ENCODE measurements at regions of chr10 and their contacts with region 1.

Region 1: GRCh38 chr10:33193057-33193700 is 141.3 kb downstream of the NRP1 start:
- DNase-seq: peak; percentile 68
- H3K4me3 ChIP-seq: peak overlapping the region in 1 of 2 experiments; percentile 32; a peak in 1 of 4 replicates
- H3K27ac ChIP-seq: peak overlapping the region; percentile 62 to 64; a peak in 3 of 4 replicates
- H3K4me1 ChIP-seq: peaks cover 4 to 34% of the 10 kb centered on the region in 2 experiments; a peak in 3 of 4 replicates
- H3K27me3 ChIP-seq: no peaks in the 10 kb centered on the region
- CTCF ChIP-seq: peak; percentile 88
- EP300 ChIP-seq: peak in 1 of 2 experiments; percentile 25; a peak in 1 of 4 replicates
- RAD21 ChIP-seq: peak; percentile 91

Region 2: DNA sequence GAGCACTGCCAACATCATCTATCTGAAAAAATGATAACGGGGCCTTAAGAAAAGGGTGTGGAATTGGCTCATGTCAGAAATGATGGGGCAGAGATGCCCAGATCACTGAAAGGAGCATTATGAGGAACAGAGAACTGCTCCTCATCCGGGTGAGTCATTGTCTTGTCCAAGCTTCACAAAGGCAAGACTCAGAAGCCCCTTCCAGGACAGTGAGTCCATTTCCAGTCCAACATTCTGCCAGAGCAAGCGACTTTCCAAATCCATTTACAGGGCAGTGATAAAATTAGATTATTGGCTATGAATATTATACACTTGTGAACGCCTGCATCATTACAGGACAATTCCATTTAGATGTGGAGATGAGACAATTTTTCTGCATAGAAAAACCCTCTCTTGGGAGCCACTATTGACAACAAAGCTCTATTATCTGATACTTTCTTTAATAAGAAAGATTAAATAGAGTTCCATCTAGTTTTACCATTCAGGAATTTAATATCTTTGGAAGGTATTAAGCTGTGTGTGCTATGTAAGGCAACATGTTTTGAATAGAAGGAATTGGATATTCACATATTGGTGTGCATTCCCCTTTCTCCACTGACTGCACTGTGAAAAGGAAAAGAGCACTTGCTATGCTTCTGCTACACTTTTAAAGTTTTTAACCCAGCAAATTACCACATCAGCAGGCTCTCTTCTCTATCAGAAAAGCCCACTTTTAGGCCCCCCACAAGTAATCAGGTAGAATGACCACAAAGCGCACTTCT is 18.3 kb before region 1 on chr10:
- CTCF ChIA-PET with region 1: interaction called, 14 read pairs
- POLR2A ChIA-PET with region 1: no interaction called
- DNase-seq: no peak
- H3K4me3 ChIP-seq: no peak overlapping the region
- H3K27ac ChIP-seq: peak overlapping the region in 1 of 2 experiments; percentile 65; a peak in 2 of 4 replicates
- H3K4me1 ChIP-seq: peaks cover 2 to 33% of the 10 kb centered on the region in 2 experiments; a peak in 3 of 4 replicates
- H3K27me3 ChIP-seq: no peaks in the 10 kb centered on the region
- CTCF ChIP-seq: no peak
- EP300 ChIP-seq: no peak
- RAD21 ChIP-seq: no peak

Region 3: DNA sequence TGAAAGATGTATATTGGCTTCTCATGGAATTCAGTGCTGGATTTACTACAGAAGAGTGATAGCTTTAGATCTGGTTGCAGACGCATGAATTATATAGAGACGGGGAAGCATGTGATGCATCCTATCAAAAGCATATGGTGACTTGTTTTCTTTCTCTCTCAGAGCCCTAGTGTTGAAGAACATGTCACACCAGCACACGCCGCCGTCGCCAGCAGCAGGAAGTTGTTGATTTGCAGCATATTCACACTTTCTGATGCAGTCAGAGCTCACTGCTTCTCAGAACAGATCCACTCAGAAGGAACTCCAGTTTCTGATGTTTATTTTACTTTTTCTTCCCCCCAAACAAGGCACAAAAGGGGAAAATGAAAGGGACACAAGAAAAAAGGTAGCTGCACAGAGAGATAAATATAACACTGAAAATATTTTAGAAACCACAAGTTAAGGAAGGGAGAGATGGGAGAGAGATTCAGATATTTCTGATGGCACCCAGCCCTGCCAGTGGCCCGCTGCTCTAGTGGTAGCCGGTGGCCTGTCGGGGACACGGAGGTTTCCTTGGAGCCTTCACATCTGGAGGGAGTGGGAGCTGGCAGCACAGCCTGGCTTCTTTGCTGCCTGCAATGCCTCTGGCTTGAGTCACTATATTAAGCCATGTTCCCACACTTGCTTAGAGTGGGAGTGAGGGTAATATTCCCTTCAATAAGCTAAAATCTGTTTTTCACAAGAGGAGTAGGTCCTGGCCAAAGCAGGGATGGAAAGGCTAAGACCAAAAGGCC is 18.1 kb after region 1 on chr10:
- CTCF ChIA-PET with region 1: interaction called, 14 read pairs
- POLR2A ChIA-PET with region 1: no interaction called
- DNase-seq: peak; percentile 22
- H3K4me3 ChIP-seq: no peak overlapping the region
- H3K27ac ChIP-seq: peak overlapping the region; percentile 48 to 88
- H3K4me1 ChIP-seq: peaks cover 9 to 31% of the 10 kb centered on the region in 2 experiments; a peak in 2 of 4 replicates
- H3K27me3 ChIP-seq: no peaks in the 10 kb centered on the region
- CTCF ChIP-seq: no peak
- EP300 ChIP-seq: no peak
- RAD21 ChIP-seq: no peak

Region 4: DNA sequence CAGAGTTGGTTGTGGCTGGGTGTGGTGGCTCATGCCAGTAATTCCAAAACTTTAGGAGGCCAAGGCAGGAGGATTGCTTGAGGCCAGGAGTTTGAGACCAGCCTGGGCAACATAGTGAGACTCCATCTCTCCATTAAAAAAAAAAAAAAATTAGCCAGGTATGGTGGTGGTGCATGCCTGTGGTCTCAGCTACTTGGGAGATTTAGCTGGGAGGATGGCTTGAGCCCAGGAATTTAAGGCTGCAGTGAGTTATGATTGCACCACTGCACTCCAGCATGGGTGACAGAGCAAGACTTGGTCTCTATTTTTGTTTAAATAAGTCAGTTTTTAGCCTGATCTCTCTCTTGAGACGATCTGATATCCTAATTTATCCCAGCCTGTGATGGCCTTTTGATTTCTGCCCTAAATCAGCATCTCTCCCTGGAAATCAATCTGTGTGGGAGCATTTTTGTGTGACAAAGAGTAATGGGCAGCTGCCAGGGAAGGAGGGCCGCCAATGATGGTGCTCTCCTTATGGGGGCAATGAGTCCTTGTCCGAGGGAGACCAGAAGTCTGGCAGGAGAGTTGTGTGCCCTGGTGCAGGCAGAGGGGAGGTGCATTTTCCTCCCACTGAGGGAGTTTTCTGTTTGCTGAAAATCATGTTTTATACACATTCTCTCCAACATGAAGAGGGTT is 30.3 kb after region 1 on chr10:
- CTCF ChIA-PET with region 1: interaction called, 13 read pairs
- POLR2A ChIA-PET with region 1: no interaction called
- DNase-seq: no peak
- H3K4me3 ChIP-seq: no peak overlapping the region
- H3K27ac ChIP-seq: no peak overlapping the region
- H3K4me1 ChIP-seq: no peaks in the 10 kb centered on the region; a peak in 1 of 4 replicates
- H3K27me3 ChIP-seq: no peaks in the 10 kb centered on the region
- CTCF ChIP-seq: no peak
- EP300 ChIP-seq: no peak
- RAD21 ChIP-seq: no peak

Region 5: DNA sequence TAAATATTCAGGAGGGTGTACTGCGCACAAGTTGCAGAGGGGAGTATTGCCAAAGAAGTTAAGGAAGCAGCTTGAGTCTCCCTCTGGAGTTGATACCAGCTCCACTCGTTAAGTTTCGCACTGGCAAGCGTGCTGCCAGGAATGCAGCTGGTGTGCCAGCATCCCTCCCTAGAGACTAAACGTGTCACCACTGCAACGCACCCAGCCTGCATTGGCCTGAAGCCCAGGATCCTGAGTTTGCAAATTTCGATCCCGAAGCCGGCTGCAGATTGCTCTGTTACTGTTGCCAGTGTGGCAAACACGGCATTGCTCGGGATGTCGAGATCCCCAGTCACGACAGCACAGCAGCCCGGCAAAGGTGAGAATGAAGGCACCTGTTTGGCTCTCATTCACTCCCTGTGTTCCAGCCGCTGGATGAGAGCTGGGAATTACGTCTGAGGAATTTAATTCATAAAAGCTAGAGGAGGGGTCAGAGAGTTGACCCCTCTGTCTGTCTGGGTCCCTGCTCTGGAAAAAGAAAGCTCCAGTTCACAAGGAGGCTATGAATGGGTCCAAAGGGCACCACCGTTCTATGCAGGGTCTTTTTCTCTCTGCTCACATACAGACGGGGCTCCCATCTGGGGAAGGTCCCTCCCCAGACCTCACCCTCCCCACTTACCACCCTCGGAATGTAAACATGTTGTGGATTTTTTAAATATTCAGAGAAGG is 80.3 kb after region 1 on chr10:
- CTCF ChIA-PET with region 1: interaction called, 10 read pairs
- POLR2A ChIA-PET with region 1: no interaction called
- DNase-seq: peak; percentile 60
- H3K4me3 ChIP-seq: peak overlapping the region; percentile 34 to 35; a peak in 3 of 4 replicates
- H3K27ac ChIP-seq: peak overlapping the region; percentile 64 to 97
- H3K4me1 ChIP-seq: peaks cover 41 to 59% of the 10 kb centered on the region in 2 experiments
- H3K27me3 ChIP-seq: no peaks in the 10 kb centered on the region
- CTCF ChIP-seq: no peak
- EP300 ChIP-seq: peak in 1 of 2 experiments; percentile 92; a peak in 3 of 4 replicates
- RAD21 ChIP-seq: peak; percentile 30

Region 6: GRCh38 chr10:33330543-33331378 is 137.6 kb after region 1 on chr10:
- CTCF ChIA-PET with region 1: interaction called, 47 read pairs
- POLR2A ChIA-PET with region 1: interaction called, 3 read pairs
- DNase-seq: peak; percentile 80
- H3K4me3 ChIP-seq: peak overlapping the region; percentile 90 to 92
- H3K27ac ChIP-seq: peak overlapping the region; percentile 78 to 93
- H3K4me1 ChIP-seq: peaks cover 16 to 17% of the 10 kb centered on the region in 2 experiments
- H3K27me3 ChIP-seq: no peaks in the 10 kb centered on the region
- CTCF ChIP-seq: peak; percentile 96
- EP300 ChIP-seq: no peak
- RAD21 ChIP-seq: peak; percentile 92

Measured in SK-N-SH (cell line).